H1 (cell line): ENCODE measurements at regions of chr13 and their contacts with region 1.

Region 1: DNA sequence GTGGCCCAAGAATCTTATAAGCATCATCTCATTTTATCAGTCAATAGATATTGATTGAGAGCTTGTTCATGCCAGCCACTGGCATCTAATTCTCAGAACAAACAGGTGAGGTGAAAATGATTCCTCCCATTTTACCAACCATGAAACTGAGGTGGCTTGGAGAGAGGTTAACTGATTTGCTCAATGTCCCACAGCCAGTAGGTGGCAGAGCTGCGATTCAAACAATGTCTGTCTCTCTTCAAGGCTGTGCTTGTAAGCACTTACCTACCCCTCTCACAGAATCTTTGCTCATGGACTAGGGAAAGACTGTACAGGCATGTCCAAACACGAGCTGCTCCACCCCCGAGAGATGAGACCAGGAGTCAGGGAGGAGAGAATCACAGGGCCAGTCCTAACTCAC is 21.5 kb upstream of the GSX1 start:
- DNase-seq: no peak
- H3K4me3 ChIP-seq: no peak overlapping the region
- H3K27ac ChIP-seq: no peak overlapping the region
- H3K4me1 ChIP-seq: no peaks in the 10 kb centered on the region
- H3K27me3 ChIP-seq: peaks cover 0 to 3% (median 0%) of the 10 kb centered on the region in 4 experiments; a peak in 3 of 7 replicates
- CTCF ChIP-seq: peak; percentile 35 to 89 (median 84)
- EP300 ChIP-seq: no peak
- POLR2A ChIP-seq: no peak
- RAD21 ChIP-seq: peak; percentile 79 to 83

Region 2: DNA sequence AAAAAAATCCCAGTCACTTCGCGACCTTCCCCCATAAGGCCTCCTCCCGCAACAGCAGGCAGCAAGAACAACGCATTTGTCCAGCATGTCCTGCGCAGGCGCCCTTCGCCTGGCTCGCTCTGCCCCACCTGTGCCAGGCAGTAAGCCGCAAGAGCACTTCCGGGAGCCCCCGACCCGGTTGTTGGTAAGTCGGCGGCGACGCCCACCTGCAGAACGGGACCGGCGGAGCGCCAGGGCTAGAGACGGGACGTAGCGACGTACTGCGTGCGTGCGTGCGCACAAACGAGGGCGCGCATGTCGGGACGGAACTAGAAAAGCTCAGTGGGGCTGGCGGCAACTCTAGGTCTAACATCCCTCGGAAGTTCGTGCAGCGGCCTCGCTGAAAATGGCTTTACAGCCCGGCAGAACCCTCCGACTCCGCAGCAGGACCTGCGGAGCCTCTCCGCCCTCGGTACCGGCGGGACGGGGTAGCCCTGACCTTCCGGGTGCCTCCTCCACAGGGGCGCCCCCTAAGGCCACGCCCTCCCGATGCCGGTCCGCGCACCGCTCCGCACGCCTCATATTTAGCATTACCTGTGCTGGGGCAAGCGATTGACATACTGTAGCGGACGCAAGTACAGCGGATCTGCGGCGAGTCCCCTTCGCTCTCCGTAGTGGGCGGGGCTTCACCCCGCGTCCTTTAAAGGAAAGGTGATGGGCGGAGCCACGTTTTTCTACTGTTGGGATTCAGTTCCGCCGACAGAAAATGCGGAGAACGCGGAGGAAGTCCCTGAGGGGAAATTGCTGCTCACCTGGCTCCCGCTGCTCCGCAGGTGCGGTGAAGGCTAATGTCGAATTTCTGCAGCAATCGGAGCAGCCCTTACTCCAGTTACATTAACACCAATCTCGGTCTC is 320.6 kb before region 1 on chr13 and contains the start of gene MTIF3:
- CTCF ChIA-PET with region 1: no interaction called
- POLR2A ChIA-PET with region 1: no interaction called
- DNase-seq: peak; percentile 95 to 97
- H3K4me3 ChIP-seq: peak within 1 kb of the TSS; percentile 74 to 89 (median 80)
- H3K27ac ChIP-seq: peak within 1 kb of the TSS; percentile 84
- H3K4me1 ChIP-seq: peaks cover 0 to 8% (median 1%) of the 10 kb centered on the region in 4 experiments; a peak in 4 of 7 replicates
- H3K27me3 ChIP-seq: no peaks in the 10 kb centered on the region
- CTCF ChIP-seq: peak in 2 of 3 experiments; percentile 1 to 3; a peak in 2 of 4 replicates
- EP300 ChIP-seq: no peak
- POLR2A ChIP-seq: peak; percentile 51 to 89
- RAD21 ChIP-seq: no peak
- total RNA-seq, gene MTIF3: 32.2 and 36.4 TPM in 2 replicates

Region 3: DNA sequence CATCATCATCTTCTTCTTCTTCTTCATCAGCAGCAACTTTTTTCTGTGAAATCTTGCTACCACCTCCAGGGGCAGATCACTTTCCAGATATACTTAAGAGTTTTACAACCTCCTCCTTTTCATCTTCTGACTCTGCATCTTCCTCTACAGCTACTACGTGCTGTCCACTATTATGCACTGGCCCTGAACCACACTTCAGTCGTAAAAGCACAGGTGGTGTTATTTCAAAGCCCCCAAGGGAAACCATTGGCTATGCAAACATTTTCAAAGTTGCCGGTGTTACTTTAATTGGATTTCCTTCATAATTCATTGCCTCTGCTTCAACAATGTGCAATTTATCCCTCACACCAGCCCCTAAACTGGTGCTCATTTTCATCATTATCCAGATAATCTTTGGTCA is 74.1 kb before region 1 on chr13:
- CTCF ChIA-PET with region 1: no interaction called
- POLR2A ChIA-PET with region 1: no interaction called
- DNase-seq: no peak
- H3K4me3 ChIP-seq: no peak overlapping the region
- H3K27ac ChIP-seq: no peak overlapping the region
- H3K4me1 ChIP-seq: no peaks in the 10 kb centered on the region
- H3K27me3 ChIP-seq: no peaks in the 10 kb centered on the region
- CTCF ChIP-seq: no peak
- EP300 ChIP-seq: no peak
- POLR2A ChIP-seq: no peak
- RAD21 ChIP-seq: no peak

Region 4: DNA sequence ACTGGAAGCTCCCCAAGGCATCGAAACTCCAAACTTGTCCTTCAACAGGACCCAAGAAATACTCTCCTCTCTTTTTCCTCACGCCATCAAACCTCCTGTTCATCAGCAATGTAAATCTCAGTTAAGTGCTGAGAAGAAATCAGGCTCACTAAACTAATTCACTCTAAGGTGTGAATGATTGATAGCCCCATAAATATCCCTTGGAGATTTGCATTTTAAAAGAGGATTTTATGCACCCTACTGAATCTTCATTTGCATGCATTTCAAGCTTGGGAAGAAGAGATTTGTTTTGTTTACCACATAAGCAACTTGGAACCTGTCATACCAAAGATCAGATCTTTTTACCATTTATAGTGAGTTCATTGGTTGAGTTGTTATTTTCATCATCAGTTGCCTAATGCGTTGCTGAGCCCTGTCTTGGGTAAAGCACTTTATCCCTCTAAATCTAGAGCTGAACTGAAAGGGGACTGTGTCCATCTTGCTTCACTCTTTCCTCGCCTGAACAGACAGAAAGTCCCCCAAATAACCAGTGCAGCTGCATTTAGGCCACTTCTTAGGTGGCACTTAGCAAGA is 18.8 kb before region 1 on chr13:
- CTCF ChIA-PET with region 1: interaction called, 10 read pairs
- POLR2A ChIA-PET with region 1: no interaction called
- DNase-seq: no peak
- H3K4me3 ChIP-seq: no peak overlapping the region
- H3K27ac ChIP-seq: no peak overlapping the region
- H3K4me1 ChIP-seq: peaks cover 0 to 8% (median 2%) of the 10 kb centered on the region in 4 experiments; a peak in 2 of 7 replicates
- H3K27me3 ChIP-seq: no peaks in the 10 kb centered on the region
- CTCF ChIP-seq: no peak
- EP300 ChIP-seq: no peak
- POLR2A ChIP-seq: no peak
- RAD21 ChIP-seq: no peak

Region 5: DNA sequence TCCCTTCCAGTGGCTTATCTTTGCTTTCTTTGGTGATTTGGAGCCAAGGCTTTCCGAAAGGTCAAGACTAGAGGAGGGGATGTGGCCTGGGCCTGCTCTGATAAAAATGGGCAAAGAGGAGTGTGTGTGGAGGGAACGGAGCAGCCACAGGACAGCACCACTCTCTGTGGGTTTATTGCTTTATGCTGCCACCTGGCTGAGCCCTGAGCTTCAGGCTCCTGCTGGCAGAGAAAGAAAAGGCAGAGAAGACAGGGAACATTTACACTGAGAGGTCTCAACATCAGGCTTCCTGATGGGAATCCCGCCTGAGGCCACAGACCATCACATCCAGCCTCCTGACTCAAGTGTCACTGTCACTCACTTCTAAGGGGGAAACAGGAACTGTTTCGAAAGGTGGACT is 12.3 kb after region 1 on chr13:
- CTCF ChIA-PET with region 1: interaction called, 98 read pairs
- POLR2A ChIA-PET with region 1: no interaction called
- DNase-seq: no peak
- H3K4me3 ChIP-seq: no peak overlapping the region
- H3K27ac ChIP-seq: no peak overlapping the region
- H3K4me1 ChIP-seq: peaks cover 0 to 7% (median 1%) of the 10 kb centered on the region in 4 experiments; a peak in 5 of 7 replicates
- H3K27me3 ChIP-seq: peaks cover 9 to 25% (median 12%) of the 10 kb centered on the region in 4 experiments
- CTCF ChIP-seq: peak; percentile 42 to 66 (median 64)
- EP300 ChIP-seq: no peak
- POLR2A ChIP-seq: no peak
- RAD21 ChIP-seq: peak; percentile 64 to 73